ENCODE measurements at regions of chr7 and their contacts with region 1.

Region 1: GRCh38 chr7:23181684-23182553 is at the start of gene NUP42:
- DNase-seq: peak; percentile 91 to 94 (median 93)
- H3K4me3 ChIP-seq: peak within 1 kb of the TSS; percentile 84
- H3K27ac ChIP-seq: peak within 1 kb of the TSS; percentile 26 to 83
- H3K4me1 ChIP-seq: peaks cover 10% of the 10 kb centered on the region
- H3K27me3 ChIP-seq: no peaks in the 10 kb centered on the region
- CTCF ChIP-seq: no peak
- EP300 ChIP-seq: peak; percentile 18
- POLR2A ChIP-seq: peak; percentile 35
- total RNA-seq, gene NUP42: 17.6 to 30.8 (median 23.1) TPM

Region 2: DNA sequence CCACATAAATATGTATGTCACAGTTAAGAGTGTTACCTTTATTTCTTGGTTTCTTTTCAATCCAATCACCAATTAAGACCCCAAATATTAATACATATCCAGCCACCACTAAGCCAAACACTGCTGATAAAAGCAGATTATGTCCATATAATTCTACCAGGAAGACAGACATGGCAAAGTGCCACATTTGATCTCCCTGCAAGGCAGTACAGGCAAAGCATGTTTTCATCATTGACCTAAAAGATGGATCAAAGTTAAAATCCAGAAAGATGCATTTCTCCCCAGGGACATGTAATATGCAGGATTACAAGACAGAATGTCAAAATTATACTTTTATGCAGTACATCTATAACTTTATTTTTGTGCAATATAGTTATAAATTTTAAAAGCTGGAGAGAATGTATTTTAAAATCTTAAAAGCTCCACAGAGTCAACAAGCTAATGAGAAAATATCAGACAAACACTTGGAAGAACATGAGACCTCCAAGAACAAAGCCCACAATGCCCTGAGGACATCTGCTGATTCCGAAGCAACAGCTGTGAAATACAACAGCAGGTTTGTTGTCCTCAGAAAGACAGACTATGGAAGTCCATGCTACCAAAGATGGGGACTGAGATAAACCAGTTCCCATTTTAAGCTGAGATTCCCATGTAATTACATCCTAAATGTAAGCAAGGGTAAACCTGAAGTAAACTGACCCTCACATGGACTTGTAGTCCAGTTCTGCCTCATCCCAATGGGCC is 304.8 kb before region 1 on chr7:
- intact Hi-C with region 1: no loop called
- DNase-seq: no peak
- H3K4me3 ChIP-seq: no peak overlapping the region
- H3K27ac ChIP-seq: no peak overlapping the region
- H3K4me1 ChIP-seq: no peaks in the 10 kb centered on the region
- H3K27me3 ChIP-seq: no peaks in the 10 kb centered on the region
- CTCF ChIP-seq: no peak
- EP300 ChIP-seq: no peak
- POLR2A ChIP-seq: no peak

Region 3: DNA sequence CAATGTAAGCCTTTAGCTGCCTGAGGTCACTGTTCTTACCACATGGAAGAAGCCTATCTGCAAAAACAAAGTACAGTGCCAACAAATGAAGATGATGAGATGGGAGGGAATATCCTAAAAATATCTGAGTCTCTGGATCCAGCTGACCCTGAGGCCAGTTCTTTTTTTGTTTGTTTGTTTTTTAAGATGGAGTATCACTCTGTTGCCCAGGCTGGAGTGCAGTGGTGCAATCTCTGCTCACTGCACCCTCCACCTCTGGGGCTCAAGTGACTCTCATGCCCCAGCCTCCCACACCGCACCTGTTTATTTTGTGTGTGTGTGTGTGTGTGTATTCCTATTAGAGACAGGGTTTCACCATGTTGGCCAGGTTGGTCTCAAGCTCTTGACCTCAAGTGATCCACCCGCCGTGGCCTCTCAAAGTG is 212.9 kb before region 1 on chr7:
- intact Hi-C with region 1: no loop called
- DNase-seq: no peak
- H3K4me3 ChIP-seq: no peak overlapping the region
- H3K27ac ChIP-seq: no peak overlapping the region
- H3K4me1 ChIP-seq: no peaks in the 10 kb centered on the region
- H3K27me3 ChIP-seq: no peaks in the 10 kb centered on the region
- CTCF ChIP-seq: no peak
- EP300 ChIP-seq: no peak
- POLR2A ChIP-seq: no peak

Region 4: DNA sequence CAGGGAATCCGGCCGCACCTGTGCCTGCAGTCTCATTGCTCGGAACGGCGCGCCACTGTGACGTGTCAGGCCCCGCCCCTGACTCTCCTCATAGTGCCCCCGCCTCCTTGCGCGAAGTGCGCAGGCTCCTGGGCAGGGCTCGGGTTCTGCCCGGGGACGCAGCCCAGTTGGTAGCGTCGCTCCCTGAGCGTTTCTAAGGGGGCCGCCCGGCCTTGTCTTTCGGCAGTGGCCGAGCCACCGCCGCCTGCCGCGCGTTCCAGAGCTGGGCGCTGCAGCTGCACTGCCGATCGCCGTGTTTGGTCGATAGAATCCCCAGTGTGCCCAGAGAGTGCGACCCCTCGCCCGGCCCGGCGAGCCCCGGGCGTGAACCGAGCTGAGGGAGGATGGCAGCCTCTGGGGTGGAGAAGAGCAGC is 76.3 kb before region 1 on chr7 and contains the start of gene KLHL7:
- intact Hi-C with region 1: loop called in 1 of 4 experiments (anchors 5 kb)
- DNase-seq: peak; percentile 93 to 98 (median 96)
- H3K4me3 ChIP-seq: peak within 1 kb of the TSS; percentile 74
- H3K27ac ChIP-seq: peak within 1 kb of the TSS; percentile 69 to 87
- H3K4me1 ChIP-seq: peaks cover 5% of the 10 kb centered on the region
- H3K27me3 ChIP-seq: no peaks in the 10 kb centered on the region
- CTCF ChIP-seq: no peak
- EP300 ChIP-seq: no peak
- POLR2A ChIP-seq: peak; percentile 86
- total RNA-seq, gene KLHL7: 27.4 to 38.3 (median 31.8) TPM

Region 5: DNA sequence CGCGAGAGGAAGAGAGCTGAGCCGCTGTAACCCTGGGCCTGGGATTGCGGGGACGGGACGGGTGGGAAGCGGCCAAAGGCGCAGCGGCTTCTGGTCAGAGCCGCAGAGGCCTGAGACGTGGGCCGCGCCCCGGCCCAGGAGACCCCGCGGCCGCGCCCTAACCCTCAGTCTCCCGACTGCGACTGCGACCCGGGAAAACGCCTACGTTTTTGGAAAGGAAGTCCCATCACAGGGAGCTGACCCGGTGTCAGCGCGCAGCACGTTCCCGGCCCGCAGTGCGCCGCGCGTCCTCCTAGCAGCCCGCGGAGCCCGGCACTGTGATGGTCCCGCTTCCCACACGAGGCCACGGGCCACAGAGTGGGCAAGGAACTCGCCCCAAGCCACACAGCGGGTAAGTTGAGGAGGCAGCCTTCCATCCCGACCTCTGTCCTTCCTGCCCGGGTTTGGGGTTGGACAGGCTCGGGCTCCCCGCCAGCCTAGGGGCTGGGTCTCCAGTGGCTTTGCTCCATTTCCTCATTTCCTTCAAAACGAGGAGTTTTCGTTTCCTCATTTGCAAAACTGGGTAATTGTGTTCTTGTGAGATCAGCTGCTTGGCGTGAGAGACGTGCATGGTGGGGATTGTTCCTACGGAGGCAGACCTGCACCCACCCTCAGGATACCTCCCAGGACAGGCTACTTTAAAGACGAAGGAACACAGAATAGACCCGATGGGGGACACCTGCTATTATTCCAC is 65.8 kb after region 1 on chr7:
- intact Hi-C with region 1: loop called in 1 of 4 experiments (anchors 10 kb)
- DNase-seq: peak in 4 of 5 donors; percentile 24 to 57 (median 25)
- H3K4me3 ChIP-seq: peak overlapping the region; percentile 26
- H3K27ac ChIP-seq: peak overlapping the region; percentile 49 to 50
- H3K4me1 ChIP-seq: no peaks in the 10 kb centered on the region
- H3K27me3 ChIP-seq: no peaks in the 10 kb centered on the region
- CTCF ChIP-seq: no peak
- EP300 ChIP-seq: no peak
- POLR2A ChIP-seq: no peak